PC-3 (cell line): ENCODE measurements at regions of chr7 and their contacts with region 1.

Region 1: DNA sequence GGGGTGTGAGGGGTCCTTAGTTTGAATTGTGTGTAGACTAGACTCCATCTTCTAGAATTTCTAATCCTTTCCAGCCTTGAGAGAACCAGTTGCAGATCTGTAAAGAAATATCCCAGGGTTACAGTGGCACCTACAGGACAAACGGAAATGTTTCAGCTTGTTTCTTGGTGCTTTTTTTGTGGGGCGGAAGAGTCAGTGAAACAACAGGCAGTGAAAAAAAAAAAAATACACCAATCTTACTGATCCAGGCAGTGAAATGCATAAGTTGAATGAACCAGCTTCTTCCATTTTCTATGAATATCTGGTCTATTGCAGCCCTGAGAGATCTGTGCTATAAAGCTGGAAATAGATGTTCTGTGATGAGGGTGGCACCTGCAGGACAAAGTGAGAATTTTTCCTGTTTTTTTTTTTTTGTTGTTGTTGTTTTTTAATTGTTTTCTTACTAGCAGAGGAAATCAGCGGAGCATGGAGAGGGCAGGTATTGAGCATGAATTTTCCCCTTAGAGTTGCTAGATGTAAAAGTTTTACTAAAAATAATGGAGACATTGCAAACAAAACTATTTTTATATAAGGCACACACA is 81.9 kb upstream of the DYNC1I1 start:
- DNase-seq: peak; percentile 51
- ATAC-seq: peak; percentile 12; the same call in 1 of the 2 replicates
- H3K4me3 ChIP-seq: no peak overlapping the region; the same call in 1 of the 2 replicates
- H3K27ac ChIP-seq: no peak overlapping the region
- H3K4me1 ChIP-seq: peaks cover 17% of the 10 kb centered on the region
- H3K27me3 ChIP-seq: peaks cover 11% of the 10 kb centered on the region; the same call in 1 of the 2 replicates
- CTCF ChIP-seq: peak; percentile 80

Region 2: GRCh38 chr7:94449148-94449725 is 1241.2 kb before region 1 on chr7:
- CTCF ChIA-PET with region 1: interaction called, 3 read pairs
- POLR2A ChIA-PET with region 1: no interaction called
- intact Hi-C with region 1: loop called (anchors 5 kb)
- DNase-seq: peak; percentile 58
- ATAC-seq: peak; percentile 48
- H3K4me3 ChIP-seq: no peak overlapping the region
- H3K27ac ChIP-seq: no peak overlapping the region
- H3K4me1 ChIP-seq: peaks cover 4% of the 10 kb centered on the region; the same call in 1 of the 2 replicates
- H3K27me3 ChIP-seq: no peaks in the 10 kb centered on the region
- CTCF ChIP-seq: peak; percentile 76

Region 3: DNA sequence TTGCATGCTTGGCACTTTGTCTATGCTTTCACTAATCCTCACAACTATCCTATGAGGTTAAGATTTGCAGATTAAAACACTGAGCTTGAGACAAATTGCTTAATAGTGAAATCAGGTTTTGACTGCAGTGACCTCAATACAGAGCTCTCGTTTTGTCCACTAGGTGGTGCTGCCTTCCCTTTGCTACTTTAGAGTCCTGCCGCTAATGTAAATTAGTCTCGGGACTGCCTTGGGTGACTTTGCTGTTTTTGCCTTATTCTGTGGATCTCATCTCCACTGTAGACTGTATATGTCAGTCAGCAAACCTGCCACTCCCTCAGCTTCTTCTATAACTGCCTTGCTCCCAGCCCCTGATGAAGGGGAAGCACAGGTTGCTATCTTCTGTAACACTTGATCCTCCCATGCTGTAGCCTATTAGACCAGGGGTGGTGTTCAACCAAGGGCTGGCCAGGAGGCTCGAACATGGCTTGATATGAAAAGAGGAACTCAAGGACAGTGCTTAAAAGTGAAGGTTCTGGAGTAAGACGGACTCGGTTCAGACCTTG is 178.7 kb before region 1 on chr7:
- CTCF ChIA-PET with region 1: interaction called, 51 read pairs
- POLR2A ChIA-PET with region 1: no interaction called
- intact Hi-C with region 1: loop called (anchors 1 kb)
- DNase-seq: peak; percentile 74
- ATAC-seq: peak; percentile 96
- H3K4me3 ChIP-seq: peak overlapping the region; percentile 14; the same call in 1 of the 2 replicates
- H3K27ac ChIP-seq: no peak overlapping the region
- H3K4me1 ChIP-seq: no peaks in the 10 kb centered on the region
- H3K27me3 ChIP-seq: 0 out of 2 replicates have a peak, but pooled peaks cover 3% of the 10 kb centered on the region
- CTCF ChIP-seq: peak; percentile 86

Region 4: DNA sequence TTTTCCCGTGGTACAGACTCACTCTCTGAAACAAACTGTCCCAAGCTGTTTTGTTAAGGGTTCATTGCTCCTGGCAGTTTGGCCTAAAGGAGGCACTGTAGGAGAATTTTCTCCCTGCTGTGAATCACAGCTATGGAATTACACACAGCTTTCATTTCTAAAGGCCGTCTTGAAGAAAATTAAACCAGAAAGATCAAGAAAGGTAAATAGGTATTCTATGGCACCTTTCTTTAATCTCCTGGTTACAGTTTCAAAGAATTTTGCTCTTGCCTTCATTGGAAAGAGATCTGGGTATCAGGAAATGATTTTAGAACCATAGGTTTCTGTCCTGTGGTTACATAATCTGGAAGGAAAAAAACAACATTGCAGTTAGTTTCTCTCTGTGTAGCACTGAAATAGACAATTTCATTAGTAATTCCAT is 145.4 kb before region 1 on chr7:
- CTCF ChIA-PET with region 1: interaction called, 52 read pairs
- POLR2A ChIA-PET with region 1: no interaction called
- intact Hi-C with region 1: no loop called
- DNase-seq: peak; percentile 71
- ATAC-seq: peak; percentile 80
- H3K4me3 ChIP-seq: peak overlapping the region; percentile 64
- H3K27ac ChIP-seq: no peak overlapping the region
- H3K4me1 ChIP-seq: peaks cover 27% of the 10 kb centered on the region
- H3K27me3 ChIP-seq: peaks cover 17% of the 10 kb centered on the region
- CTCF ChIP-seq: peak; percentile 90

Region 5: DNA sequence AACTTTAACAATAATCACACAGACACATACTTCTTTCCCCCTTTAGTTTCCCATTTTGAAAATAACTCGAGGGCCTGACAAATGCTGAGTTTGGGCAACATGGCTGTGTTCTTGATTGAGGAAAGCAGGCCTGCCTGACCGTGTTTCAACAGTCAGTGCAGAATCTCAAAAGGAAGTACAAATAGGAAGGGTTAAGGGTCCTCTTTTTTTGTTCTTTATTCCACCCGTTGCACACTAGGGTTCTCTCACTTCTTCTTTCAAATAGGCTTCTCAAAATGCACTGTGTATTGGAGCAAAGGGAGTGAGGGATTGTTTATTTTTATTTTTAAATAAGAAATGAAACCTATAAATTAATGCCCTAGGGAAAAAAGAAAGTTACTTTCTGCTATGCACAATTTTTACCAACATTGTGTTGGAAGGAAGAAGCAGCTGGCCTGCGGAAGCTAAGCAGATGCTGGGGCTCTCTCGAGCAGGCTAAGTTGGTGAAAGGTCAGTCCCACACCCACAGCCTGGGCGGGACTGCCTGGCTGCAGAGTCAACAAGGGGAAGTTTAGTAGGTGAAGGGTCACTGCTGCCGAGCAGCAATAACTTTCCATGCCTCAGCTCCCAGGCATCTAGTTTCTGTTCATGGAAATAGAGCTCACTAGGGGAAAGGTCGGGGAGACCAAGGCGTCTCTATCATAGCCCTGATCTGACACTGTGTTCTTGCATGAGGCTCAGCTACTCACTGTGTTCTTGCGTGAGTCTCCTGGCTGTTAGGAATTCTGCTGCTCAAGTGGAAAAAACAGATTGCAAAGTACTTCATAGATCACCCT is 81.9 kb before region 1 on chr7:
- CTCF ChIA-PET with region 1: interaction called, 11 read pairs
- POLR2A ChIA-PET with region 1: no interaction called
- intact Hi-C with region 1: loop called (anchors 2 kb)
- DNase-seq: peak; percentile 94
- ATAC-seq: peak; percentile 91
- H3K4me3 ChIP-seq: peak overlapping the region; percentile 19; the same call in 1 of the 2 replicates
- H3K27ac ChIP-seq: peak overlapping the region; percentile 63
- H3K4me1 ChIP-seq: peaks cover 31% of the 10 kb centered on the region
- H3K27me3 ChIP-seq: no peaks in the 10 kb centered on the region
- CTCF ChIP-seq: no peak